Activated naive CD4-positive, alpha-beta T cell treated with anti-CD3 and anti-CD28 coated beads for 36 hours (primary cell): ENCODE measurements at regions of chr20 and their contacts with region 1.

Region 1: DNA sequence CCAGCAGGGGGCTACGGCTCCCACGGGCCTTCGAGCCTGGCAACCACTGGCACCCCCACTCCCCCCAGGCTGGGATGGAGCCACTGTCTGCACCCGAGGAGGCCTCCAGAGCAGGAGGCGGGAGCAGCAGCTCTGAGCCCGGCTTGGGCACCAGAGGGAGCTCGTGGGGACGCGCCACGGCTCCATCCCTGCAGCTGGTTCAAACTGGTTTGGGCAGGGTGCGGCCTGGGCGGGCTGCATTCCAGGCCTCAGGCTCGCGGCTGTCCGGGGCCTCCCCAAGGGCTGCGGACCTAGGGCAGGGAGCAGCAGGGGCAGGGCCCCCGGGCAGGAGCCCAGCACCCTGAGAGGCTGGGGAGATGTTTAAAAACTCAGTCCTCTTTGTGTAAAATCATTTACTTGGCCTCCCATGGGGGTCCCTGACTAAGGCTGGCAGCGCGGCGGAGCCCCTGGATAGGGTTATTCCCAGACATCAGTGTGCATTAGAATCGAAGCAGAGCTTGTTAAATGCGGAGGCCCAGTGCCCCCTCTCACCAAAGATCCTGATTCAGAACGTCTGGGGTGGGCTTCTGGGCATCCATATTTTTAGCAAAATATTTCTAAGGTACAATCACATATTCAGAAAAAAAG is 4.1 kb upstream of the BCAS4 start:
- DNase-seq: peak; percentile 89
- H3K4me3 Mint-ChIP-seq: peak overlapping the region; percentile 21
- H3K27ac Mint-ChIP-seq: peak overlapping the region; percentile 40
- H3K4me1 Mint-ChIP-seq: peaks cover 11% of the 10 kb centered on the region
- H3K27me3 Mint-ChIP-seq: no peaks in the 10 kb centered on the region

Region 2: GRCh38 chr20:50731055-50731871 is 59.5 kb before region 1 on chr20 and contains the start of gene PARD6B:
- CTCF ChIA-PET with region 1: no interaction called
- intact Hi-C with region 1: loop called (anchors 2 kb)
- DNase-seq: peak; percentile 100
- H3K4me3 Mint-ChIP-seq: peak within 1 kb of the TSS; percentile 86
- H3K27ac Mint-ChIP-seq: peak within 1 kb of the TSS; percentile 70
- H3K4me1 Mint-ChIP-seq: peaks cover 45% of the 10 kb centered on the region
- H3K27me3 Mint-ChIP-seq: no peaks in the 10 kb centered on the region
- total RNA-seq, gene PARD6B: 3.3 to 3.9 TPM

Region 3: DNA sequence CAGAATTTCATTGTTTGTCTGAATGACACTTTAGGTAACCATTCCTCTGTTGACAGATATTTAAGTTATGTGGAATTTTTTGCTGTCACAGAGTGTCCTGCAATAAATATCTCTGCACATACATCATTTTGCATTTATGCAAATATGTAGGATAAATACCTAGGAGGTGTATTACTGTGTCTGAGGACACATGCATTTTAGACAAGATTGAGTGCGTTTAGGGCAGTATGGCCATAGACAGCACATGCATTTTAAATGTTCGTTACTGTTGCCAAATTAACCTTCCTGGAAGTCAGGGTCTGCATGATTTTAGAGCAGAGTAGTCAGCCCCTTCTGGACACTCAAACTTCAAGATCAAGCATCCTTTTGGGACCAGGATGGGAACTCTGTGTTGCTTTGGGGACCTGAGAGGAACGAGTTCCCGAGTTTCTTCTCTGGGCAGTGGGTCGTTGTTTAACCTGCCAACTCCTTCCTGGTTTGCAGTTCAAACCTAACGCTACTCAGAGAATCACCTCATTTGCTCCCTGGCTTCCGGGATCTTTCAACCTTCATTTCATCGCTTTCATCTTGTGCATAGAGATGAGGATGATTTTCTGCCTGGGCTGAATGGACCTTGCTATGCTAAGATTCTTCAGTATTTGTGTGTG is 13.8 kb after region 1 on chr20:
- CTCF ChIA-PET with region 1: interaction called, 17 read pairs
- intact Hi-C with region 1: loop called (anchors 1 kb)
- DNase-seq: peak; percentile 61
- H3K4me3 Mint-ChIP-seq: peak overlapping the region; percentile 64
- H3K27ac Mint-ChIP-seq: peak overlapping the region; percentile 91
- H3K4me1 Mint-ChIP-seq: peaks cover 32% of the 10 kb centered on the region
- H3K27me3 Mint-ChIP-seq: no peaks in the 10 kb centered on the region

Region 4: GRCh38 chr20:50929299-50930138 is 138.8 kb after region 1 on chr20:
- CTCF ChIA-PET with region 1: interaction called, 79 read pairs
- intact Hi-C with region 1: loop called (anchors 1 kb)
- DNase-seq: peak; percentile 99
- H3K4me3 Mint-ChIP-seq: peak overlapping the region; percentile 85
- H3K27ac Mint-ChIP-seq: peak overlapping the region; percentile 96
- H3K4me1 Mint-ChIP-seq: peaks cover 48% of the 10 kb centered on the region
- H3K27me3 Mint-ChIP-seq: no peaks in the 10 kb centered on the region

Region 5: DNA sequence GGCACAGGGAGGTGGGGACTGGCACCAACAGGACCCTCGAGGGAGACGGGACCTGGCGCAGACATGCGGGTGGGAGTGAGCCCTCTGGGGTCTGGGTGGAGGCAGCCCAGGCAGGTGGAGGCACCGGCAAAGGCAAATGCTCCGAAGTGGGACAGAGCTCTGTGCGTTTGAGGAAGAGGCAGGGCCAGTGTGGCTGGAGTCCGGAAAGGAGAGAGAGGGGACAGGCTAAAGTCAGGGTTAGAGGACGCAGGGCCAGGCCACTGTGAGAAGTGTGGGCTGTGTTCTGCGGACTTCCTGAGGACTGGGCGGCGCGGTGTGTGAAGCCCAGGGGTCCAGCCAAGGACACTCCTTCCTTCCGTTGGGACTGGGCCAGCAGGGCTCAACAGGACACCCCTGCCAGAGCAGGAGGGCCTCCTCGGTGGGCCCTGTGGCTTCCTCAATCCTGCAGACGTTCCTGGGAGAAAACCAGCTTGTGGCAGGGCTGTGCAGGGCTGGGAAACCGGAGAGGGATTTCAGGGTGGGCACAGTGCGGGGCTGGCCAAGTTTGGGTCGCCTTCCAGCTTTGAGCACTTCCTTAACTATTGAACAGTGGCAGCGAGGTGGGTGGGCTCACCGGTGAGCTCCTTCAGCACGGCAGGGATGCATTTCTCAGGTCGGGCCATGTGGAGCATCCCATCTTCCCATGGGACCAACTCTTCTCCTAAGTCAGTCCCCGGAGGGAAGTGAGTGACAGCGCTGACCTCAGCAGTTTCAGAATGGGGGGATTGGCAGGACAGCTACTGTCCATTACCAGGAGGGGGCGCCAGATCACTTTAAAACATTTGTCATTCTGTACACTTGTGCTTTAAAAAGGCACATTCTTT is 190.3 kb after region 1 on chr20:
- CTCF ChIA-PET with region 1: interaction called, 11 read pairs
- intact Hi-C with region 1: loop called (anchors 2 kb)
- DNase-seq: peak; percentile 83
- H3K4me3 Mint-ChIP-seq: no peak overlapping the region
- H3K27ac Mint-ChIP-seq: peak overlapping the region; percentile 19
- H3K4me1 Mint-ChIP-seq: peaks cover 15% of the 10 kb centered on the region
- H3K27me3 Mint-ChIP-seq: peaks cover 19% of the 10 kb centered on the region

Region 6: DNA sequence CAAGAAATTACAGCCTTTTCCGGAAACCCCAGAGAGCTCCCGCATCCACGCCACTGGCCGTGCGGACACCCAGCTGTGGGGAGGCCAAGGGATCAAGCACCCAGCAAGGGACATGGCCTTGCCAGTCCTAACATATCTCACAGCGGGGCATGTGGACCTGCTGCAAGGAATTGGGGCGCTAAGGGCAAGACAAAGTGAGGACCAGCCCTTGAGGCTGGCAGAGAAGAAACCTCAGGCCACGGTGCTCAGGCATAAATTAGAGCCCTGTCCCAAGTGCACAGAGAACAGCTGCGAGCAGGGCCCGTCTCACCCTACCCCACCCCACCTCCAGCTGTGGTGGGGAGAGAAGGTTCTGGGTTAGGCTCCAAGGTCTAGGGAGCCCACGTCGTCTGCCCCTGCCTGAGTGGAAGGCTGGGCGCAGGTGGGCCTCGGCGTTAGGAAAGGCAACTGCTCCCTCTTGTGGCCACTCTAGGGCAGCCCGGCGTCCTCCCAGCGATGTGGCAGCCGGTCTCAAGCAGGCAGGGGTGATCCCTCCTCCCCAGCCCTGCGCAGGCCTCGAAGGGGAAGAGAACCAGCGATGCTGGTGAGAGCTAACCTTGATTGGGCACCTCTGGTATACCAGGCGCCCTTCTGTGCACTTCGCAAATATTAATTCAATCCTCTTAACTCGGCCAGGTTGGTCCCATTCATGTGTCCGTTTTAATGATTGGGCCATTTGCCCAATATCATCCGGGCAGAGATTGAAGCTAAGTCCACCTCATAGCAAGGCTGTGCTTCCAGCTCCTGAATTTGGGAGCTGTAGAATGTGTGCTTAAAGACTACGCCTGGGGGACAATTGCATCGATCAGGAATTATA is 516.0 kb after region 1 on chr20:
- CTCF ChIA-PET with region 1: interaction called, 3 read pairs
- intact Hi-C with region 1: loop called (anchors 1 kb)
- DNase-seq: peak; percentile 83
- H3K4me3 Mint-ChIP-seq: no peak overlapping the region
- H3K27ac Mint-ChIP-seq: no peak overlapping the region
- H3K4me1 Mint-ChIP-seq: no peaks in the 10 kb centered on the region
- H3K27me3 Mint-ChIP-seq: peaks cover 8% of the 10 kb centered on the region